Mucosa of descending colon (tissue), 3 donors: ENCODE measurements at regions of chr4 and their contacts with region 1.

Region 1: GRCh38 chr4:31674313-31674947 is 954.3 kb downstream of the PCDH7 start:
- DNase-seq: peak in 1 of 3 donors; percentile 15
- ATAC-seq: no peak
- H3K4me3 ChIP-seq: no peak overlapping the region
- H3K4me1 ChIP-seq: no peaks in the 10 kb centered on the region
- CTCF ChIP-seq: no peak

Region 2: GRCh38 chr4:30714408-30715027 is 959.9 kb before region 1 on chr4:
- intact Hi-C with region 1: loop called in 1 of 2 experiments (anchors 10 kb)
- DNase-seq: peak in 2 of 3 donors; percentile 33 to 70
- ATAC-seq: peak; percentile 62
- H3K4me3 ChIP-seq: no peak overlapping the region
- H3K4me1 ChIP-seq: peaks cover 20% of the 10 kb centered on the region
- CTCF ChIP-seq: peak; percentile 56

Region 3: DNA sequence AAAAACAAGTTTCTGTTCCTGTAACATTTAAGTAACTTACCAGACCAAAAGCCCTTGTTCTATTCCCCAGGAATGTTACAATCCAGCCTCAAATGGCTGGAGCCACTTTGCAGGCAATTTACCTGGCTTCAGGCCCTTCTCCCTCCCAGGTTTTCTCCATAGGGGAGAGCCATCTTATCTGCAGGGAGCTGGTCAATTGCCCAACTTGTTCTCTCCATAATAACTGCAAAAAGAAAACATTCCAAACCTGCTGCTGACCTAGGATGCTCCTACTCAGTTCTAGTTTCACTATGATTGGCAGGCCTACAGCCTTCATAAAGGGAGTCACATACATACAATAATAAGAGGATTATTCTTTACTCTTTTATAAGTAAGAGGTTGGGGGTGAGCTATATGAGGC is 283.6 kb before region 1 on chr4:
- intact Hi-C with region 1: no loop called
- DNase-seq: no peak
- ATAC-seq: no peak
- H3K4me3 ChIP-seq: no peak overlapping the region
- H3K4me1 ChIP-seq: no peaks in the 10 kb centered on the region
- CTCF ChIP-seq: no peak